ENCODE measurements at regions of chr20 and their contacts with region 1.

Region 1: DNA sequence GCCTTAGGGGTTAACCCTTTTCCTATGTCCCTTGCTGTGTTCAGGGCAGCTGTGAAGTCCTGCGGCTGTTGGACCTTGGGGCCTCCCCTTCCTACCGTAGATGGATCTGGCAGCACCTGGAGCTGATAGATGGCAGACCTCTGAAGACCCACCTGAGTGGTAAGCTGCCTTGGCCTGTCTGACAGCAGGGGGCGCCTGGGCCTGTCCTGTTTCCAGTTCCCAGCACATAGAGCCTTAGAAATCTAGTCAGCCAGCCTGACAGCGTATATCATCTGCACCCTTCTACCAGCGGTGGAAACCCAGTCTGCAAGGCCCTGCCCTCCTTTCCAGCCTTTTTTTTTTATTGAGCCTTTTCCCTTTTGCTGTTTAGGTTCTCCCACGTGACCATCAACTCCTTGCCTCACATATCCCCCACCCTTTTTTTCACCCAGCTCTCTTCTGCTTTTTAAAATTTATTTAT is 26.6 kb downstream of the CNBD2 start:
- DNase-seq: peak; percentile 88
- H3K27ac ChIP-seq: no peak overlapping the region
- CTCF ChIP-seq: peak; percentile 98

Region 2: GRCh38 chr20:35942243-35942642 is 52.8 kb before region 1 on chr20:
- CTCF ChIA-PET with region 1: no interaction called
- POLR2A ChIA-PET with region 1: no interaction called
- DNase-seq: no peak
- H3K27ac ChIP-seq: no peak overlapping the region; the same call in 1 of the 2 replicates
- CTCF ChIP-seq: no peak

Region 3: DNA sequence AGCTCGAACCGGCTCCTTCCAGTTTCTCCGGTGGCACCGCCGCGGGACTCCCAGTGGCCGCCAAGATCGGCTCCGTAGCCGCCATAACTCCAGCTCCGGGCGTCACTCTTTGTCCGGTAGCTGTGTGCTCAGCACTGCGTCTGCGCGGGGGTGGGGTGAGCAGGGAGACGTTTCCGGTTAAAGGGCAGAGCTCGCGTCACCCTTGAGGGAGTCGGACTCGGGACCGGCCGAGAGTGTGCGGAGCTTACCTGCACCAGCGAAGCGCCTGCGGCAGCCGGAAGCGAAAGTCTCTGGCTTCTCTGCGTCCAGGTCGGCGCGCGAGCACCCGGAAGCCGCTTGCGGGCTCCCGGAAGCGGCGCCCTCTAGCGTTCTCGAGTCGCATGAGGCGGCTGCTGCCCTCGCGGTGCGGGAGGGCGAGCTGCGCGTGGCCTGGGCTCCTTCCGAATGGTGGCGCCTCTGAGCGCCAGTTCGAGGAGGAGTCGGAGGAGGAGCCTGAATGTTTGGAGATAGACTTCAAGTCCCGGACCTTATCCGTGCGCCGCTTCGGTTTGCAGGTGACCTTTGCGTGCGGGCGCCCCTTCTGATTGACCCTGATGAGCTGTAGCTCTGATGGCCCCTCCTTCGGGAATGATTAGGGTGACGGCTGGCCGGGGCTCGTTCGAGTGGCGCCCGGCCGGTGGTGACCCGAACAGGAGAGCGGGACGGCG is 40.7 kb before region 1 on chr20 and contains the start of gene SCAND1:
- CTCF ChIA-PET with region 1: interaction called, 17 read pairs
- POLR2A ChIA-PET with region 1: interaction called, 5 read pairs
- DNase-seq: peak; percentile 100
- H3K27ac ChIP-seq: peak within 1 kb of the TSS; percentile 99
- CTCF ChIP-seq: peak; percentile 100

Region 4: DNA sequence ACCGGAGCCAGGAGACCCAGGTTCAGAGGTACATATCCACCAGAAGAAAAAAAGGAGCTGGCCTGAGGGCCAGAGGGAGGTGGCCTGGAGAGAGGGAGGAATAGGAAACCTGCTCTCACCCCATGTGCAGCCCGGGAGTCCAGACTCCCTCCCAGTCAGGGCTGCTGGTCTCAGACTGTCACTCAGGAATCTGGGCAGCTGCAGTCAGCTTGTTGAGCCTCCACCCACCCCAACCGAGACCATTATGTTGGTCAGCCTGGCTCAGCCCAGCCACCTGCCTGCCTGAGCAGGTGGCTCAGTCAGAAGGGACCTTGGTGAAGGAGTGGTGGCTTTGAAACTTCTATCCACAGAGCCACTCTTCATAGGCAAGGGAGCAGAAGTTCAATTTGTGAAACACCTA is 106.2 kb after region 1 on chr20:
- CTCF ChIA-PET with region 1: interaction called, 14 read pairs
- POLR2A ChIA-PET with region 1: no interaction called
- DNase-seq: no peak
- H3K27ac ChIP-seq: peak overlapping the region; percentile 76
- CTCF ChIP-seq: no peak

Region 5: DNA sequence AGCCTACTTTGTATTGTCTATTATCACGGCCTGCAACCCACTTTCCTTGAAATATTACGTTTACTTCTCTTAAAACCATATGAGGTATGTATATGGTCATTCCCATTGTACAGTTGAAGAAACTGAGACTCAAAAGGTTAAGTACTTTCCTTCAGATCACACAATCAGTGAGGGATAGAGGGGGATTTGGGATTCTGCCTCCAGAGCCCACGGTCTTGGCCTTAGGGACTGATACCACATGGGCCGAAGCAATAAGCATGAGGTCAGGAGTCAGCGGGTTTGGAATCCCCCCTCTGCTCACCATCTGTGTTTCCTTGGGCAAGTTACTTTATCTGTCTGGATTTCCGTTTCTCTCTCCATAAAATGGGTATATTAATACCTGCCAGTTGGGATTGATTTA is 140.1 kb after region 1 on chr20:
- CTCF ChIA-PET with region 1: interaction called, 115 read pairs
- POLR2A ChIA-PET with region 1: interaction called, 6 read pairs
- DNase-seq: no peak
- H3K27ac ChIP-seq: no peak overlapping the region
- CTCF ChIP-seq: no peak

Region 6: GRCh38 chr20:36154700-36155628 is 159.9 kb after region 1 on chr20 and contains the start of gene EPB41L1:
- CTCF ChIA-PET with region 1: interaction called, 11 read pairs
- POLR2A ChIA-PET with region 1: no interaction called
- DNase-seq: no peak
- H3K27ac ChIP-seq: peak within 1 kb of the TSS; percentile 44
- CTCF ChIP-seq: no peak